ENCODE measurements at regions of chr18 and their contacts with region 1.

Region 1: GRCh38 chr18:31247574-31248199 is 70.3 kb upstream of the DSG1 start:
- DNase-seq: peak in 1 of 2 experiments; percentile 35
- H3K4me3 ChIP-seq: no peak overlapping the region
- H3K27ac ChIP-seq: no peak overlapping the region
- H3K4me1 ChIP-seq: peaks cover 41% of the 10 kb centered on the region
- H3K27me3 ChIP-seq: no peaks in the 10 kb centered on the region
- CTCF ChIP-seq: no peak

Region 2: DNA sequence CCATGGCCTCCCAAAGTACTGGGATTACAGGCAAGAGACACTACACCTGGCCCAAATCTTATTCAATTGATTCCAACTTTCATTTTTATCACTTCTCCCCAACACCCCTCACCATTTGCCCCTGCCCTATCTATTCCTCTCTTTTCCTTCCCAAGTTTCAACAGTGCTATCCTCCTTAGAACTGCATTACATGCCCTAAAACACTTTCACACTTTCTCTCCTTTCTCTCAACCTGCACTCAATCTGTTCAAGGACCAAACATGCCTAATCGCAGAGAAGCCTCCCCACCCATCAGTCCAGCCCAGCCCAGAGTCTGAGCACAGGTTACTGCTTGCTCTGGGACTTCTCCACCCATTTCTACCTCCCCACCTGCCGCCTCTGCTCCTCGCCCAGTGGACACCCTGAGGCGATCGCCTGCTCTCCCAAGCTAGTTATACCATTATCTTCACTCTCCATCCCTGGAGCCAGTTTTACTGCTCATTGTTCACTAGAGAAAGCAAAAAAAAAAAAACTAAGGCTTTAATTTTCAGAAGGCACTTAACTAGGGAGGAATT is 46.6 kb after region 1 on chr18:
- CTCF ChIA-PET with region 1: no interaction called
- POLR2A ChIA-PET with region 1: interaction called, 12 read pairs
- intact Hi-C with region 1: no loop called
- DNase-seq: no peak
- H3K4me3 ChIP-seq: no peak overlapping the region
- H3K27ac ChIP-seq: no peak overlapping the region
- H3K4me1 ChIP-seq: no peaks in the 10 kb centered on the region
- H3K27me3 ChIP-seq: no peaks in the 10 kb centered on the region
- CTCF ChIP-seq: no peak

Region 3: DNA sequence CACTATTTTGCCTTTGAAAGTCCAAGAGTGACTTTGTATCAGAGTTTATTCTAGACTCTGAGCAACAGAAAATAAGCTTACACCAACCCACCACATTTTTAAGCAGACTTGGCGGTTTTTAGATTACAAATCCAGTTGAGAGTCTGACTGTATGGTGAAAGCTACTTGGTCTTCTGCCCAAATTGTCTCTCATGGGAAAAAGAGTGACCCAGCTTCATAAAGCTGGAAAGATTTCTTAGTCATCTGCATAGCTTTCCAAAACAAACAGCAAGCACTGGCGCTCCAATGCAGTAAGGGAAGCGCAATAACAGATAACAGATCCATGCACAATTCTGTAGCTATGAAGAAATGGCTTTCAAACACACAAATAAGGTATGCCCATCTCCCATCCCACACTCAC is 77.4 kb after region 1 on chr18:
- CTCF ChIA-PET with region 1: no interaction called
- POLR2A ChIA-PET with region 1: no interaction called
- intact Hi-C with region 1: no loop called
- DNase-seq: no peak
- H3K4me3 ChIP-seq: no peak overlapping the region
- H3K27ac ChIP-seq: no peak overlapping the region
- H3K4me1 ChIP-seq: no peaks in the 10 kb centered on the region
- H3K27me3 ChIP-seq: no peaks in the 10 kb centered on the region
- CTCF ChIP-seq: no peak